ENCODE measurements at regions of chr20 and their contacts with region 1.

Region 1: DNA sequence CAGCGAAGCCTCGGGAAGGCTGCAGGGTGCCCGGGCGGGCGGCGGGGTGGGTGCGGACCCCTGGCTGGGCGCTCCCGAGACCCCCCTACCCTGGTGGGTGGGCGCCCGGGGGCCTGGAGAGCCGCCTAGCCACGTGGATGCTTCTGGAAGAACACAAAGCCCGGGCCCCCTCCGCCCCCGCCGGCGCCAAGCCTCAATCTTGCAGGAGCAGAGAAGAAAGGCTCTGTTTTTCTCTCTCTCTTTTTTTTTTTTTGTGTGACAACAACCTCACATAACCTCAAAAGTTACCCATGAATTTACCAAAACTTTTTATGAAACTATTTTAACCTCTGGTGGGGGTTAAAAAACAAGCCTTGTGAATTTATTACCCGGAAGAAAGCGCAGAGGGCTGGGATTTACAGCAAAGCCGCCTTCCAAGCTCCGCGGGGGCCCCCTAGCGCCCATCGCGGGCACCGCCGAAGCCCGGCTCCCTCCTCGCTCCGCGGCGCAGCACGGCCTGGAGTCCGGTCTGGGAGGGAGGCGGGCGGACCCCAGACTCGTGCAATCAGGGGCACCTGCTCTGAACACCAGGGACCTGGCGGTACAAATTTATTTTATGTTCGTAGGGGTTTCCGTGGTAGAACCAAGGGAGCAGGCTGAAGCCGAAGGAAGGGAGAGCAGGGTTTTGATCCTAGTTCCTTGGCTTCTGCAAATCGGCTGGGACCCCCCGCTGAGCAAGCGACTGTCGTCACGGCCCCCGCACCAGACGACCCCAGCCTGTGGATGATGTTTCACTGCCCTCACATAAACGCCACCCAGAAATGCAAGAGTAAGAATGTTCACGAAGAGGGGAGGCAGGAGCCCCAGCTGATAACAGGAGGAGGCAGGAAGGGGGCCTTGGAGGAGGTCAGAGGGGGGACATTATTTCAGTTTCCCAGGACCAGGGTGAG is 58.9 kb downstream of the ZNF831 start:
- DNase-seq: peak; percentile 69 to 80
- H3K4me3 ChIP-seq: peak overlapping the region; percentile 27 to 47
- H3K27ac ChIP-seq: no peak overlapping the region
- H3K4me1 ChIP-seq: peaks cover 0 to 26% (median 14%) of the 10 kb centered on the region in 4 donors
- H3K27me3 ChIP-seq: peaks cover 0 to 54% of the 10 kb centered on the region in 2 donors
- CTCF ChIP-seq: peak; percentile 87 to 98

Region 2: GRCh38 chr20:58870239-58871014 is 352.1 kb before region 1 on chr20:
- intact Hi-C with region 1: loop called (anchors 2 kb)
- DNase-seq: peak; percentile 45 to 77
- H3K4me3 ChIP-seq: no peak overlapping the region
- H3K27ac ChIP-seq: no peak overlapping the region
- H3K4me1 ChIP-seq: no peaks in the 10 kb centered on the region
- H3K27me3 ChIP-seq: peaks cover 0 to 5% of the 10 kb centered on the region in 2 donors
- CTCF ChIP-seq: peak; percentile 90

Region 3: GRCh38 chr20:59087829-59088433 is 134.6 kb before region 1 on chr20:
- intact Hi-C with region 1: loop called (anchors 5 kb)
- DNase-seq: peak; percentile 81
- H3K4me3 ChIP-seq: no peak overlapping the region
- H3K27ac ChIP-seq: no peak overlapping the region
- H3K4me1 ChIP-seq: peaks cover 0 to 12% (median 7%) of the 10 kb centered on the region in 4 donors
- H3K27me3 ChIP-seq: peaks cover 0 to 10% of the 10 kb centered on the region in 2 donors
- CTCF ChIP-seq: peak; percentile 75 to 83

Measured in tibial artery (tissue), 4 donors.